Activated CD4-positive, alpha-beta memory T cell treated with anti-CD3 and anti-CD28 coated beads for 36 hours (primary cell): ENCODE measurements at regions of chrX and their contacts with region 1.

Region 1: GRCh38 chrX:119647552-119648420 is 41.6 kb upstream of the NKRF start:
- DNase-seq: peak; percentile 84
- H3K4me3 Mint-ChIP-seq: peak overlapping the region; percentile 51
- H3K27ac Mint-ChIP-seq: peak overlapping the region; percentile 97
- H3K4me1 Mint-ChIP-seq: peaks cover 33% of the 10 kb centered on the region
- H3K27me3 Mint-ChIP-seq: no peaks in the 10 kb centered on the region

Region 2: DNA sequence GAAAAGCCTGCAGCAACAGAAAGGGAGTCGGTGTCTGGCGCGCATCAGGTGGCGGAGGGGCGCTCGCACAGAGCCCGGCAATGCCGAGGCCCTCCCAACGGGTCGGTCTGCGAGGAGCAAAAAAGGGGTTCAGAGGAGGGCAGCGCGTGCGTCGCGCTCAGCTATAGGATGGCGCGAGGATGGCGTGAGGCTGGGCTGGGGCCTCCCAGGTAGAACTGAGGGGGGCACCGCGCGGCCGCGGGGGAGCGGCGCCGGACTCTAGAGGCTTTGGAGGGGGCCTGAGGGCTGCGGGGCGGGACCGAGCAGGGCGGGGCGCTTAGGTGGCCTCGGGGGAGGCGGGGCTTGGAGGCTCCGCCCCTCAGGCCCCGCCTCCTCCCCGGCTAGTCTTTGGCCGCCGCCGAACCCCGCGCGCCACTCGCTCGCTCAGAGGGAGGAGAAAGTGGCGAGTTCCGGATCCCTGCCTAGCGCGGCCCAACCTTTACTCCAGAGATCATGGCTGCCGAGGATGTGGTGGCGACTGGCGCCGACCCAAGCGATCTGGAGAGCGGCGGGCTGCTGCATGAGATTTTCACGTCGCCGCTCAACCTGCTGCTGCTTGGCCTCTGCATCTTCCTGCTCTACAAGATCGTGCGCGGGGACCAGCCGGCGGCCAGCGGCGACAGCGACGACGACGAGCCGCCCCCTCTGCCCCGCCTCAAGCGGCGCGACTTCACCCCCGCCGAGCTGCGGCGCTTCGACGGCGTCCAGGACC is 411.7 kb before region 1 on chrX and contains the start of gene PGRMC1:
- CTCF ChIA-PET with region 1: no interaction called
- POLR2A ChIA-PET with region 1: no interaction called
- intact Hi-C with region 1: no loop called
- DNase-seq: peak; percentile 83
- H3K4me3 Mint-ChIP-seq: peak within 1 kb of the TSS; percentile 80
- H3K27ac Mint-ChIP-seq: peak within 1 kb of the TSS; percentile 79
- H3K4me1 Mint-ChIP-seq: peaks cover 24% of the 10 kb centered on the region
- H3K27me3 Mint-ChIP-seq: peaks cover 2% of the 10 kb centered on the region
- total RNA-seq, gene PGRMC1: 29.0 to 29.4 TPM

Region 3: DNA sequence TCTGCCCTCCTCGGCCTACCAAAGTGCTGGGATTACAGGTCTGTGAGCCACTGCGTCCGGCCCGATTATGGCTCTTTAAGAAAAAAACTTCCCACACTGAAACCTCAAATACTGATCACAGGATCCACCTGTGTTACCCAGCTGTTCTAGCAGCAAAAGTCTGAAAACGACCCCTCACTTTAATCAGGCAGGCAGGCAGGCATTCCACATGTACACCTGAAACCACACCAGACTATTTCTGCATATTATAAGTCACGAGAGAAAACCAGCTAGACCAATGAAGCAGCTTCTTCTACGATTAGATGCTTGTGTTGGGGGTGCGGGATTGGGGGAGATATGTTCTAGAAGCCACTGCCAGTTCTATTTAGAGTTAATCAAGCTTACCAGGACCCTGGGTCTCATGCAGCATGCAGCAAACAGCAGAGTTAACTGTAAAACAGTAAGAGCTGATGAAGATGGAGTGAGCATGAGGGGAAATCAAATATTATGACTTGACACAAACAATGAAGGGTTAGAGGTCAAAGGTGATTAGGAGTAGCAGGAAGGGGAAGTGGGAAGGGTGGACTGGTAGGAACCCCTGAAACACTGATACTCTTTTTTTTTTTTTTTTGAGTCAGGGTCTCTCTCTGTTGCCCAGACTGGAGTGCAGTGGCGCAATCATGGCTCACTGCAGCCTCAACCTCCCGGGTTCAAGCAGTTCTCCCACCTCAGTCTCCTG is 22.7 kb before region 1 on chrX:
- CTCF ChIA-PET with region 1: no interaction called
- POLR2A ChIA-PET with region 1: no interaction called
- intact Hi-C with region 1: no loop called
- DNase-seq: no peak
- H3K4me3 Mint-ChIP-seq: no peak overlapping the region
- H3K27ac Mint-ChIP-seq: peak overlapping the region; percentile 29
- H3K4me1 Mint-ChIP-seq: no peaks in the 10 kb centered on the region
- H3K27me3 Mint-ChIP-seq: no peaks in the 10 kb centered on the region

Region 4: GRCh38 chrX:119685225-119686066 is 37.7 kb after region 1 on chrX:
- CTCF ChIA-PET with region 1: interaction called, 5 read pairs
- POLR2A ChIA-PET with region 1: interaction called, 10 read pairs
- intact Hi-C with region 1: loop called (anchors 1 kb)
- DNase-seq: peak; percentile 73
- H3K4me3 Mint-ChIP-seq: peak overlapping the region; percentile 88
- H3K27ac Mint-ChIP-seq: peak overlapping the region; percentile 99
- H3K4me1 Mint-ChIP-seq: peaks cover 48% of the 10 kb centered on the region
- H3K27me3 Mint-ChIP-seq: no peaks in the 10 kb centered on the region

Region 5: GRCh38 chrX:119753571-119754257 is 105.9 kb after region 1 on chrX:
- CTCF ChIA-PET with region 1: no interaction called
- POLR2A ChIA-PET with region 1: interaction called, 3 read pairs
- intact Hi-C with region 1: loop called (anchors 1 kb)
- DNase-seq: peak; percentile 54
- H3K4me3 Mint-ChIP-seq: peak overlapping the region; percentile 16
- H3K27ac Mint-ChIP-seq: peak overlapping the region; percentile 90
- H3K4me1 Mint-ChIP-seq: peaks cover 40% of the 10 kb centered on the region
- H3K27me3 Mint-ChIP-seq: no peaks in the 10 kb centered on the region